ENCODE measurements at regions of chr7 and their contacts with region 1.

Region 1: GRCh38 chr7:110698576-110698975 is 392.4 kb upstream of the LRRN3 start:
- DNase-seq: no peak

Region 2: DNA sequence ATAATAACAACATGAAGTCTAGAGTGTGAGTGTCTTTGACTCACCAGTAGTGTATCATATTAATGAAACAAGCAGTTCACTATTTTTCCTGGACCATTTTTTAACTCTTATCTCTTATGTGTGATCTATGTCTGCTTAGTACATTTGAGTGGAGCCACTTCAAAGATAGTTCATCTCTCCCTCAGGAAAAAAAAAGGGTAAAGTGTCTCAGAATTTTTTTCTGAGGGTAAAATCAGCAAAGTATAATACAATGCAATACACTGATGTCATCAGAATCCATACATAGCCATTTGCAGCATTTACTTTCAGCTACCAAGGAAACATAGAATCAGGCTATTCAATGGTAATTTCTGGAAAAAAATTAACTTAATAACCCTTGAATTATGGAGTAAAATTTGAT is 1422.2 kb before region 1 on chr7:
- intact Hi-C with region 1: loop called in 1 of 2 experiments (anchors 5 kb)
- DNase-seq: no peak